ENCODE measurements at regions of chr5 and their contacts with region 1.

Region 1: GRCh38 chr5:93789173-93790070 is 48.0 kb upstream of the POU5F2 start:
- DNase-seq: peak; percentile 70
- H3K4me3 ChIP-seq: no peak overlapping the region
- H3K27ac ChIP-seq: no peak overlapping the region
- H3K4me1 ChIP-seq: peaks cover 3% of the 10 kb centered on the region
- H3K27me3 ChIP-seq: no peaks in the 10 kb centered on the region
- CTCF ChIP-seq: no peak

Region 2: GRCh38 chr5:93596676-93597461 is 192.6 kb before region 1 on chr5:
- CTCF ChIA-PET with region 1: no interaction called
- dilution Hi-C with region 1: no loop called
- in situ Hi-C with region 1: loop called (anchors 10 to 25 kb)
- intact Hi-C with region 1: no loop called
- DNase-seq: peak; percentile 16
- H3K4me3 ChIP-seq: no peak overlapping the region
- H3K27ac ChIP-seq: no peak overlapping the region
- H3K4me1 ChIP-seq: peaks cover 9% of the 10 kb centered on the region
- H3K27me3 ChIP-seq: no peaks in the 10 kb centered on the region
- CTCF ChIP-seq: no peak

Region 3: GRCh38 chr5:93620487-93621326 is 168.7 kb before region 1 on chr5:
- CTCF ChIA-PET with region 1: no interaction called
- dilution Hi-C with region 1: no loop called
- in situ Hi-C with region 1: loop called in 1 of 2 experiments (anchors 25 kb)
- intact Hi-C with region 1: no loop called
- DNase-seq: peak; percentile 67
- H3K4me3 ChIP-seq: peak overlapping the region; percentile 62 to 73 (median 71)
- H3K27ac ChIP-seq: no peak overlapping the region
- H3K4me1 ChIP-seq: peaks cover 10% of the 10 kb centered on the region
- H3K27me3 ChIP-seq: no peaks in the 10 kb centered on the region
- CTCF ChIP-seq: peak in 1 of 2 donors; percentile 33

Measured in mammary epithelial cell (primary cell).